Activated T-helper 1 cell treated with anti-CD3 and anti-CD28 coated beads, Interleukin-12 subunit alpha, Interleukin-12 subunit beta, Interleukin-2, Interleukin-4 antibody, amounts not matched to agents 30 ng/mL and 10 ng/mL and 1 ng/mL, durations not matched to agents 14 hours and 24 hours and 36 hours (primary cell): ENCODE measurements at regions of chr11 and their contacts with region 1.

Region 1: GRCh38 chr11:36354221-36355003 is 58.3 kb downstream of the PRR5L start:
- DNase-seq: no peak
- H3K4me3 Mint-ChIP-seq: peak overlapping the region; percentile 11
- H3K27ac Mint-ChIP-seq: peak overlapping the region; percentile 72
- H3K4me1 Mint-ChIP-seq: peaks cover 78% of the 10 kb centered on the region
- H3K27me3 Mint-ChIP-seq: peaks cover 34% of the 10 kb centered on the region

Region 2: DNA sequence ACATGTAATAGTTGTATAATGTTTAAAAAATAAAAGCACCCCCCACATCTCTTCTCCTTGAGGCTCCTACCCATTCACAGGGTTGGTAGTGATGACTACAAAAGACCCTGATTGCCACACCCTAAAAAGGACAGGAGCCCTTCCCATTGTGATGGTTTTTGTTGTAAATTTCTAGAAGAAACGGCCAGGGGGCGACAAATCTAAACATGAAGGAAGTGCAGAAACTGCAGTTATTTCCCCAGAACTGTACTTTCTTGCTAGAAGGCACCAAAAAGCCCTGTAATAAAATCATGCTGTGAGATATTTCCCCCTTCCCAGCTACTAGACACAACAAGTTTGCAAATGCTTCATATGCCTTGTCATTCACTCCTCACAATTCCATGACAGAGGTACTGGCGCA is 47.5 kb before region 1 on chr11:
- intact Hi-C with region 1: loop called (anchors 2 kb)
- DNase-seq: no peak
- H3K4me3 Mint-ChIP-seq: no peak overlapping the region
- H3K27ac Mint-ChIP-seq: no peak overlapping the region
- H3K4me1 Mint-ChIP-seq: peaks cover 9% of the 10 kb centered on the region
- H3K27me3 Mint-ChIP-seq: peaks cover 6% of the 10 kb centered on the region

Region 3: DNA sequence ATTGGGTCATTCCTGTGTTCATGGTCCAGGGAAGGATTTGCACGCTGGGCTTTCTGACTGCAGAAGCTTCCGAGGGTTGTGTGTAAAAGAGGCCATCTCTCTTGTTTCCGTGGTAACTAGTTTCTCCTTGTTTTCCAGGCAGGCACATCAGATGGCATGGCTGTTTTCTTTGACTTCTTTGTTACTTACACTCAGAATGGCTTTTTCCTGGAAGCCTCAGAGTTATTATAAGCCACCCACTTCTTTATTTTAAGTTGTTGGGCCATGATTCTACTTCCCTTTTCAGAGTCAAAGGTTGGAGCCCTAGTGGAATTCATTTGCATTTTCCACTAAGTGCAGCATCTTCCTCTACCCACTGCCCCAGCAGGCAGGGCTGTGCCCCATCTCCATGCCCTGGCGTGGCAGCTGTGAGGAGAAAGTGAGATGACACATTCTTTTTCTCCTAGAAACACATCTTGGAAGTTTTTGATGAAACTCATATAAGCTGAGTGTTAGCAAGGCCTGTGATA is 36.6 kb after region 1 on chr11:
- intact Hi-C with region 1: loop called (anchors 1 kb)
- DNase-seq: no peak
- H3K4me3 Mint-ChIP-seq: peak overlapping the region; percentile 40
- H3K27ac Mint-ChIP-seq: peak overlapping the region; percentile 66
- H3K4me1 Mint-ChIP-seq: peaks cover 86% of the 10 kb centered on the region
- H3K27me3 Mint-ChIP-seq: no peaks in the 10 kb centered on the region

Region 4: GRCh38 chr11:36403661-36404060 is 49.2 kb after region 1 on chr11:
- intact Hi-C with region 1: no loop called
- DNase-seq: no peak
- H3K4me3 Mint-ChIP-seq: peak overlapping the region; percentile 85
- H3K27ac Mint-ChIP-seq: peak overlapping the region; percentile 62
- H3K4me1 Mint-ChIP-seq: peaks cover 86% of the 10 kb centered on the region
- H3K27me3 Mint-ChIP-seq: no peaks in the 10 kb centered on the region

Region 5: DNA sequence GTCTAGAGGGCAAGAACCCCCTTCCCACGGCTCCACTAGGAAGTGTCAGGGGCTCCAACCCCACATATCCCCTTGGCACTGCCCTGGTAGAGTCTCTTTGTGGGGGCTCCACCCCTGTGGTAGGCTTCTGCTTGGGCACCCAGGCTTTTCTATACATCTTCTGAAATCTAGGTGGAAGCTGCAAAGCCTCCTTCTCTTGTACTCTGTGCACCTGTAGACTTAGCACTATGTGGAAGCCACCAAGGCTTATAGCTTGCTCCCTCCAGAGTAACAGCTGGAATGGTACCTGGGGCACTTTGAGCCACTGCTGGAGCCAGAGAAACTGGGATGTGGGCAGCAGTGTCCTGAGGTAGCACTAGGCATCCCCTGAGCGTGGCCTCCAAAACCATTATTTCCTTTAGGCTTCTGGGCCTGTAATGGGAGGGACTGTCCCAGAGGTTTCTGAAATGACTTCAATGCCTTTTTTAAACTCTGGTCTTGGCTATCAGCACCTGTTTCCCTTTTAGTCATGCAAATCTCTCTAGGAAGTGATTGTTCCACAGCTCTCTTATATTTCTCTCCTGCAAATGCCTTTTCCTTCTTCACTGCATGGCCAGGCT is 87.3 kb after region 1 on chr11:
- intact Hi-C with region 1: loop called (anchors 1 kb)
- DNase-seq: no peak
- H3K4me3 Mint-ChIP-seq: no peak overlapping the region
- H3K27ac Mint-ChIP-seq: peak overlapping the region; percentile 36
- H3K4me1 Mint-ChIP-seq: peaks cover 41% of the 10 kb centered on the region
- H3K27me3 Mint-ChIP-seq: no peaks in the 10 kb centered on the region

Region 6: DNA sequence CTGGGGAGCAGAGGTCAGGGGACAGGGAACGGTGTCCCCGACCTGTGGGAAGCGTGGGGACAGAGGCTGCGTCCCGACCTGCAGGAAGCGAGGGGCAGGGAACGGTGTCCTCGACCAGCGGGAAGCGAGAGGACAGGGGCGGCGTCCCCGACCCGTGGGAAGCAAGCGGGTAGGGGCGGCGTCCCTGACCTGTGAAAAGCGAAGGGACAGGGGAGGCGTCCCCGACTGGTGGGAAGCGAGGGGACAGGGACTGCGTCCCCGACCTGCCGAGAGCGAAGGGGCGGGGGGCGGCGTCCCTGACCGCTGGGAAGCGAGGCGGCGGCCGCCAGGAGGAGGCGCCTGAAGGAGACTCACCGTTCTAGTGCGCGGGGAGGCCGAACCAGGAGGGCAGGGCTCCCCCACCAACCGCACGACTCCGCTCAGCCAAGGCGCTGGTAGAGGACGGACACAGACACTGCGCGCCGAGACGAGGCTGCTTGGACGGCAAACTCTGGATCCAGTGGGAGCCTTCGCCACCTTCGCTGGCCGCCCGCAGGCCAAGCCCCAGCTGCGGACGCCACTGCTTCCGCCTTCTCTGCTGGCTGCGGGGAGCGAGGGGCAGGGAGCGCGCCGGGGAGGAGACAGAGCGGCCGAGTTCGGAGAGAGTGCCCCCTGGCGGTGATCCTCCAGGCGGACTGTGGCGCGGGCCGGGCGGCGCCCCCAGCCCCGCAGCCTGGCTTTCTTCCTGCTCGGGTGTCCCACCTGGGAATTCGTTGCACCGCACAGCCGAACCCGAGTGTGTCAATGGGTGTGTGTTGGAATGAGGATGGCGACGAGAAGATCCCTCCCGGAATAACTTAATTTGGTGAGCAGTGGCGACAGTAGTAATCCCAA is 155.5 kb after region 1 on chr11 and contains the start of gene TRAF6:
- intact Hi-C with region 1: loop called (anchors 1 kb)
- DNase-seq: peak; percentile 83
- H3K4me3 Mint-ChIP-seq: peak within 1 kb of the TSS; percentile 97
- H3K27ac Mint-ChIP-seq: peak within 1 kb of the TSS; percentile 91
- H3K4me1 Mint-ChIP-seq: peaks cover 30% of the 10 kb centered on the region
- H3K27me3 Mint-ChIP-seq: peaks cover 9% of the 10 kb centered on the region
- total RNA-seq, gene TRAF6: 10.5 and 11.1 TPM in 2 replicates

Region 7: GRCh38 chr11:36974771-36975170 is 620.4 kb after region 1 on chr11:
- intact Hi-C with region 1: no loop called
- DNase-seq: no peak
- H3K4me3 Mint-ChIP-seq: no peak overlapping the region
- H3K27ac Mint-ChIP-seq: no peak overlapping the region
- H3K4me1 Mint-ChIP-seq: no peaks in the 10 kb centered on the region
- H3K27me3 Mint-ChIP-seq: no peaks in the 10 kb centered on the region